ENCODE measurements at regions of chr11 and their contacts with region 1.

Region 1: DNA sequence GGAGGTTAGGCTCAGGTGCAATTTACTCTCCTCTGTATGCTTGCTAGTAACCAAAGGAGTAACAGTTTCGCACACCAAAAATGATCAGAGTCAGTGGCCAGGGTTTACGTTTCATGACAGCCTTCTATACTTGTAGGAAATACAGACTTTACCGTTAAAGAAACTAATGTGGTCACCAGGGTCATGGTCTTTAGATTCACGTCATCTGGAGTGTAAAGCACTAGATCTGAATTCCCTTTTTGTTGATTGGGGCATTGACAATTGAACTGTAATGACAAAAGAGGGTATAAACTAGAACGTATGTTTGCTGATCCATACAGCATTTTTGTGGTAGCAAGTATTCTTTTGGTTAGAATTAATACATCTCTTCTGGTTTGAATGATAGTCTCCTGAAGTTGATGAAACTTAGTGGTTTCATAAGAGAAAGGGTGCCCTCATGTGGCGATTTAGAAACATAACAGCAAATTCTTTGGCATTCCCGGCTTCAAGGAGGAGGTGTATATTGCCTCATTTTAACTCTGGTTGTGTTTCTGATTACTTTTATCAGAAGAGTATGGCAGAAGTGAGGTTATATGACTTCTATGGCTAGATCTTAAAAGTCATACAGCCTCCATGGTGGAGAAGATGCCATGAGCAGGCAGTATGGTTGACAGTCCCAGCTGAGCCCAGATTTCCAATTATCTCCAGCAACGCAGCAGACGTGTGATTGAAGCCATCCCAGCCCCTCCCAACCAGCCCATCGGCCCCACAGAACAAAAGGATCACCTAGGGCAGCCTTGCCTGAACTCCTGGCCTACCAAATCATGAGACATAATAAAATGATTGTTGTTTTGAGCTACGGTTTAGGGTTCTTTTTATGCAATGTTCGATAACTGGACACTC is 35.1 kb downstream of the MMP7 start:
- DNase-seq: no peak

Region 2: DNA sequence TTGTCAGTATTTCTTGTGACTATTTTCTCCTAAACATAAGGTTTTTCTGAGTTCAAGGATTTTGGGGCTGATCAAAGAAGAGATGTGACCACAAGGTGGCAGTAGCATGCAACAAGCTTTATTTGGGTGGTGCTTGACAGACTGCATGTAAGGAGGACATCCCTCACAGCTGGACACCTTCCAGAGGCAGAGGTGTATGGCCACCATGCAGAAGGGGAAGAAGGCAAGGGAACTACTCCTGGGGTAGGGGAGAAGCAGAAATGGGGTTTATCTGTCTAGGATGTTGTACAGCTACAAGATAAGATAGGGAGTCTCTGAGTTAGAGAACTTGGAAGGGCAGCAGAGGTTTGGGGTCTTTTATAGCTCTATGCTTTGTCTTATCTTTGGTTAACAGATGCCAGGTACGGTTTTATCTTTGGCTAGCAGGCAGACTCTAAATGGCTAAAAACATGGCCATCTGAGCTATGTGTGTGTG is 153.5 kb before region 1 on chr11:
- intact Hi-C with region 1: loop called in 1 of 2 experiments (anchors 2 kb)
- DNase-seq: no peak

Region 3: GRCh38 chr11:102384419-102385079 is 110.9 kb before region 1 on chr11:
- intact Hi-C with region 1: loop called in 1 of 2 experiments (anchors 10 kb)
- DNase-seq: no peak

Region 4: GRCh38 chr11:102407901-102408300 is 87.5 kb before region 1 on chr11:
- intact Hi-C with region 1: loop called in 1 of 2 experiments (anchors 10 kb)
- DNase-seq: no peak

Region 5: DNA sequence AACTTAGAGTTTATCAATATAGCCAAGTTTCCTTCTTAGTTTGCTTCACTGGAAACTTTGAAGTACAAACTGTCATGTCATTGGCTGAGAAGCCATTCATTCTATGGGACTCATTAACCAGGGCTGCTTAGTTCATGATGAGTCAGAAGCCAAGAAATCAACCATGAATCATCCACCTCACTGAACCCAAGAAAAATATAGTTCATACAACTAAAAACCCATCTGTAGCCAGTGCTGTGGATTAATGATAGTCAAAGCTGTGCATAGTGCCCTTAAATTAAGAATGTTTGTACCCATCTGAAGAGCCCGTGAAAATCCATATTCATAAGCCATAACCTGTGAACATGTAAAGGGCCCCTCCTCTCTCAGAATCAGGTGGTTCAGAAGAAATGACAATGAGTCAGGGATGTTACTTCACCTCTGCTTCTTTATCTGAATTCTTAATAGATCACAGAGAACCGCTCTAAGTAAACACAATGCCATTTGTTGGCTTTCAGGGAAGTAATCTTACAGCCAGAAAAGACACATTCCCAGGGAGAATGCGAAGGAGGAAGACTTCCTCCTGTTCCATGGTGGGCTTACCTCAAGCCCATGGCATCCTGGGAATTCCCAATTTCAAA is 104.3 kb after region 1 on chr11:
- intact Hi-C with region 1: no loop called
- DNase-seq: no peak

Region 6: GRCh38 chr11:103344886-103345285 is 849.5 kb after region 1 on chr11:
- intact Hi-C with region 1: no loop called
- DNase-seq: no peak

Region 7: DNA sequence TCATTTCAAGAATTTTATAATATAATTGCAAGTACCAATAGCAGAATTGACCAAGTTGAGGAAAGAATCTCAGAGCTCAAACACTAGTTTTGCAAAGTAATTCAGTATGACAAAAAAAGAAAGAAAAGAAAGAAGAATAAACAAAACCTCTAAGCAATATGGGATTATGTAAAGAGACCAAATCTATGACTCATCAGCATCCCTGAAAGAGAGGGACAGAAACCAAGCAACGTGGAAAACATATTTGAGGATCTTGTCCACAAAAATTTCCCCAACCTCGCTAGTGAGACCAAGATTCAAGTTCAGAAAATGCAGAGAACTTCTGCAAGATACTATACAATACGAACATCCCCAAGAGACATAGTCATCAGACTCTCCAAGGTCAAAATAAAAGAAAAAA is 1337.4 kb after region 1 on chr11:
- intact Hi-C with region 1: no loop called
- DNase-seq: no peak

Measured in posterior vena cava (tissue), 2 donors.